Activated CD4-positive, alpha-beta T cell treated with anti-CD3 and anti-CD28 coated beads, Interleukin-2, amount 10 ng/mL, durations not matched to agents 24 days and 14 days (primary cell): ENCODE measurements at regions of chr2 and their contacts with region 1.

Region 1: GRCh38 chr2:240560480-240561326 is 546 bp downstream of the DUSP28 start:
- DNase-seq: peak; percentile 100
- H3K4me3 Mint-ChIP-seq: peak overlapping the region; percentile 94
- H3K27ac Mint-ChIP-seq: peak overlapping the region; percentile 94
- H3K4me1 Mint-ChIP-seq: peaks cover 63% of the 10 kb centered on the region
- H3K27me3 Mint-ChIP-seq: no peaks in the 10 kb centered on the region

Region 2: GRCh38 chr2:240136013-240136670 is 424.6 kb before region 1 on chr2 and contains the start of gene COPS9:
- intact Hi-C with region 1: loop called (anchors 10 kb)
- DNase-seq: peak; percentile 96
- H3K4me3 Mint-ChIP-seq: peak within 1 kb of the TSS; percentile 94
- H3K27ac Mint-ChIP-seq: peak within 1 kb of the TSS; percentile 87
- H3K4me1 Mint-ChIP-seq: peaks cover 21% of the 10 kb centered on the region
- H3K27me3 Mint-ChIP-seq: no peaks in the 10 kb centered on the region
- total RNA-seq, gene COPS9: 132 and 135 TPM in 2 replicates

Region 3: GRCh38 chr2:240513549-240514287 is 47.0 kb before region 1 on chr2:
- intact Hi-C with region 1: loop called (anchors 1 kb)
- DNase-seq: peak; percentile 94
- H3K4me3 Mint-ChIP-seq: peak overlapping the region; percentile 31
- H3K27ac Mint-ChIP-seq: peak overlapping the region; percentile 69
- H3K4me1 Mint-ChIP-seq: peaks cover 7% of the 10 kb centered on the region
- H3K27me3 Mint-ChIP-seq: no peaks in the 10 kb centered on the region

Region 4: GRCh38 chr2:240579771-240580614 is 19.3 kb after region 1 on chr2:
- intact Hi-C with region 1: no loop called
- DNase-seq: peak; percentile 87
- H3K4me3 Mint-ChIP-seq: no peak overlapping the region
- H3K27ac Mint-ChIP-seq: peak overlapping the region; percentile 68
- H3K4me1 Mint-ChIP-seq: peaks cover 23% of the 10 kb centered on the region
- H3K27me3 Mint-ChIP-seq: no peaks in the 10 kb centered on the region

Region 5: GRCh38 chr2:240765007-240765406 is 204.3 kb after region 1 on chr2:
- intact Hi-C with region 1: no loop called
- DNase-seq: no peak
- H3K4me3 Mint-ChIP-seq: no peak overlapping the region
- H3K27ac Mint-ChIP-seq: no peak overlapping the region
- H3K4me1 Mint-ChIP-seq: no peaks in the 10 kb centered on the region
- H3K27me3 Mint-ChIP-seq: no peaks in the 10 kb centered on the region

Region 6: GRCh38 chr2:240832205-240832727 is 271.6 kb after region 1 on chr2:
- intact Hi-C with region 1: loop called (anchors 1 kb)
- DNase-seq: peak; percentile 99
- H3K4me3 Mint-ChIP-seq: peak overlapping the region; percentile 77
- H3K27ac Mint-ChIP-seq: no peak overlapping the region
- H3K4me1 Mint-ChIP-seq: peaks cover 2% of the 10 kb centered on the region
- H3K27me3 Mint-ChIP-seq: peaks cover 23% of the 10 kb centered on the region

Region 7: GRCh38 chr2:240913810-240914644 is 353.3 kb after region 1 on chr2:
- intact Hi-C with region 1: no loop called
- DNase-seq: peak; percentile 91
- H3K4me3 Mint-ChIP-seq: no peak overlapping the region
- H3K27ac Mint-ChIP-seq: no peak overlapping the region
- H3K4me1 Mint-ChIP-seq: no peaks in the 10 kb centered on the region
- H3K27me3 Mint-ChIP-seq: peaks cover 8% of the 10 kb centered on the region

Region 8: GRCh38 chr2:241199897-241200821 is 639.5 kb after region 1 on chr2:
- intact Hi-C with region 1: no loop called
- DNase-seq: no peak
- H3K4me3 Mint-ChIP-seq: no peak overlapping the region
- H3K27ac Mint-ChIP-seq: no peak overlapping the region
- H3K4me1 Mint-ChIP-seq: no peaks in the 10 kb centered on the region
- H3K27me3 Mint-ChIP-seq: no peaks in the 10 kb centered on the region